Mammary epithelial cell (primary cell): ENCODE measurements at regions of chr2 and their contacts with region 1.

Region 1: GRCh38 chr2:23169896-23170295 is 215.1 kb upstream of the KLHL29 start:
- DNase-seq: no peak
- H3K4me3 ChIP-seq: no peak overlapping the region
- H3K27ac ChIP-seq: no peak overlapping the region
- H3K4me1 ChIP-seq: no peaks in the 10 kb centered on the region
- H3K27me3 ChIP-seq: no peaks in the 10 kb centered on the region
- CTCF ChIP-seq: no peak

Region 2: GRCh38 chr2:23069923-23070322 is 100.0 kb before region 1 on chr2:
- CTCF ChIA-PET with region 1: no interaction called
- dilution Hi-C with region 1: loop called (anchors 5 kb)
- in situ Hi-C with region 1: no loop called
- intact Hi-C with region 1: no loop called
- DNase-seq: no peak
- H3K4me3 ChIP-seq: no peak overlapping the region
- H3K27ac ChIP-seq: no peak overlapping the region
- H3K4me1 ChIP-seq: no peaks in the 10 kb centered on the region
- H3K27me3 ChIP-seq: no peaks in the 10 kb centered on the region
- CTCF ChIP-seq: no peak

Region 3: GRCh38 chr2:23249348-23249747 is 79.5 kb after region 1 on chr2:
- CTCF ChIA-PET with region 1: no interaction called
- dilution Hi-C with region 1: no loop called
- in situ Hi-C with region 1: no loop called
- intact Hi-C with region 1: no loop called
- DNase-seq: peak; percentile 17
- H3K4me3 ChIP-seq: no peak overlapping the region
- H3K27ac ChIP-seq: no peak overlapping the region
- H3K4me1 ChIP-seq: no peaks in the 10 kb centered on the region
- H3K27me3 ChIP-seq: no peaks in the 10 kb centered on the region
- CTCF ChIP-seq: no peak